Activated CD8-positive, alpha-beta T cell treated with anti-CD3 and anti-CD28 coated beads, Interleukin-2, amount 10 ng/mL, durations not matched to agents 7 days and 5 days (primary cell): ENCODE measurements at regions of chrX and their contacts with region 1.

Region 1: DNA sequence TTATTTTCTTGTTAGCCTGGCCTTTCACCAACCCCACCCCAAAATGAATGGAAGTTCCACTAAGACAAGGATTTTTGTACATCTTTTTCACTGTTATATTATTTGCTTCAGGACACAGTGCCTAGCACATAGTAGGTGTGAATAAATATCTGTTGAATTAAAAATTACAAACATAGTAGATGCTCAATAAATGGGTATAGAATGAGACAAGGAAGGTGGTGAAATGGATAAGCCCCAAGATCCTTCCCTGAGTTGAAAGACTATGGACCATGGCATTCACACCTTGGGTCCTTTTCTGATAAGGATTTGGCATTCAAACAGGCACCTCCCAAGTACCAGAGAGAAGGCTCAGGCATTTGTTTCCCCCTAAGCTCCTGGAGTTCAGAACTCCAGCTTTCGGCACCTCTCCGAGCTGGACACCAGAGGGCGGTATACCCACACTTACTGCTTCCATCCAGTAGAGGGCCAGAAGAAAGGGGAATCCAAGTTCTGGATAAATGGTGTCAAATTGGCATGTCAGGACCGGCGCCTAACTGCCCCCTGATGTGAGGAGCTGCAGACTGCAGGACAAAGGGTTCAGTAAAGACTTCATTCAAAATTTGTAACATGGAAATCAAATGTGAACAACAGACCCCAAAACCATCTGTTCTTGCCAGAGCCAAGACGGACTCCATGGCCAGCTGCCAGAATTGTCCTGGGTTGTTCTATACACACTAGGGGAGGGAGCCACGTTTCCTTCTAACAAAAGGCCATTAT is 193.0 kb downstream of the GPC3 start:
- DNase-seq: peak; percentile 69
- ATAC-seq: peak; percentile 76
- H3K4me3 Mint-ChIP-seq: no peak overlapping the region
- H3K27ac Mint-ChIP-seq: no peak overlapping the region
- H3K4me1 Mint-ChIP-seq: no peaks in the 10 kb centered on the region
- H3K27me3 Mint-ChIP-seq: peaks cover 2% of the 10 kb centered on the region

Region 2: DNA sequence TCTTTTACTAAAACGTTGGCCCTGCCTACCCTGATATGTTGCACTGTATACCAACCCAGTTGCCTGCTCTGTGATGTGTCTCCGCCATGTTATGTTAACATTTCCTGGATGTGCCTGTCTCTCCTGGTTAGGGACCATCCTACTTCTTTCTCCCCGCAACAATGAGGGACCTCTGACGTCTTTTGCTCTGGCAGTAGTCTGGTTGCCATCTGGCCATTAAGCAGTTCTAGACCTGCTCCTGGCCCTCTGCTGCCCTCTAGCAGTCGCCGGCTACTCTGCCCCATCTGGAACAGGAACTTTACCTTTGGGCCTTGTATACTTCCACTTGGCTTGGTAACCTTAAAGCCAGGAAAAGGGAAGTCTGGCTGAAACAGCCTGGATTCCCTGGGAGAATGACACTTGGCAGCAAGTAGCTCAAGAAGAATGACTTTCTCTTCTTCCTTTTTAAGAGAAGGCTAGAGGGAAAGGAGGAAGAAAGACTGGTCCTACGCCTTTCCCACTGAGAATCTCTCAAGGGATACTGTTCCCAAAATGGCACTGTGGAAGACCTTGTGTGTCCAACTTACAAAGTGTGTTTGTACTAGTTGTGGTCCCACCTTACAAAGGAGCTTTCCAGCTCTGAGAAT is 129.5 kb after region 1 on chrX:
- CTCF ChIA-PET with region 1: interaction called, 18 read pairs
- POLR2A ChIA-PET with region 1: no interaction called
- DNase-seq: peak; percentile 41
- ATAC-seq: no peak
- H3K4me3 Mint-ChIP-seq: no peak overlapping the region
- H3K27ac Mint-ChIP-seq: no peak overlapping the region
- H3K4me1 Mint-ChIP-seq: peaks cover 18% of the 10 kb centered on the region
- H3K27me3 Mint-ChIP-seq: no peaks in the 10 kb centered on the region

Region 3: DNA sequence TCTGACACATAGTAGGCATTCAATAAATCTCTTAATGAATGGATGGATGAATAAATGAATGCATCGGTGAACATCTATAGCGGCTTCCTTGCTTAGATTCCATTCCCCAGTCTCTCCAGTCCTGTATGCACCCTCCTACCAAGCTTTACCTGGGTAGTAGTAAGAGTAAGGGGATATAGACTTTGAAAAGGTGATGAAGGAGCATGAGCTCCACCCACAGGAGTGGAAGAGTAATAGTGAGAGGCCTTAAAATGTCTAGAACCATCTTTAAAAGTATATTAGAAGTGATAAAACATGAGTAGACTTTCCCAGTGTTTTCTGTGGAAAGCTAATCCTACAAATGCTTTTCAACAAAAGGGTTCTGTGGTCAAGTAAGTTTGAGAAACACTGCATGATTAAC is 228.5 kb after region 1 on chrX:
- CTCF ChIA-PET with region 1: interaction called, 23 read pairs
- POLR2A ChIA-PET with region 1: no interaction called
- DNase-seq: no peak
- ATAC-seq: no peak
- H3K4me3 Mint-ChIP-seq: no peak overlapping the region
- H3K27ac Mint-ChIP-seq: no peak overlapping the region
- H3K4me1 Mint-ChIP-seq: no peaks in the 10 kb centered on the region
- H3K27me3 Mint-ChIP-seq: peaks cover 5% of the 10 kb centered on the region

Region 4: DNA sequence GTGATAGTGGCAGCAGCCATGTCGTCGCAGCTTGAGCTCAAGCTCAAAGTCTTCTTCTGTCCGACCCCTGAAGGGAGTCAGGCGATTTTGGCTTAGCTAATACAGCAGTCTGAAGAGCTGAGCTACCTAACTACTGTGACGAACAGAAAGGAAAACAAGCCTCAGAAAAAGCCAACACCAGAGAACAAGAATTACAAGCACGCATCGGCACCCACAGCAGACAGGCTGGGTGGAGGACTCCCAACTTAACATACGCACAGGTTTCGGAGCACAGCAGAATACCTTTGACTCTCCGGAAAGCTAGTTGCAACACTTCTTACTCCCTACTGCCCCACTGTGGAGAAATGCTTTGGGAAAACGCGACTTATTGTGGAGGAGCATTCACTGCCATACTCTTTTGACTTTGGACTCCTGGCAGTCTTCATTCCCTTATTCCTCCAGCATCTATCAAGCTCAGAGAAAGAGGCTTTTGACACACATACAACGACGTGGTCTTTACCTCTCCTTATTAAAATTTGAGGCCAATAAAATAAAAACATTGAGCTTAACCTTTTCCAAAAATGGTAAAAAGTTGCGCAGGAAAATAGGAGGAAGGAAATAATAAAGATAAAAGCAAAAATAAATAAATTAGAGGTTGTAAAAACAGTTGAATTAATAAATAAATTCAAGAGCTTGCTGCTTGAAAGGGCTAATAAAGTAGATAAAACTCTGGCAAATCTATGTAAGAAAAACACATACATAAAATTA is 234.4 kb after region 1 on chrX:
- CTCF ChIA-PET with region 1: interaction called, 23 read pairs
- POLR2A ChIA-PET with region 1: no interaction called
- DNase-seq: peak; percentile 37
- ATAC-seq: no peak
- H3K4me3 Mint-ChIP-seq: no peak overlapping the region
- H3K27ac Mint-ChIP-seq: no peak overlapping the region
- H3K4me1 Mint-ChIP-seq: peaks cover 8% of the 10 kb centered on the region
- H3K27me3 Mint-ChIP-seq: no peaks in the 10 kb centered on the region

Region 5: DNA sequence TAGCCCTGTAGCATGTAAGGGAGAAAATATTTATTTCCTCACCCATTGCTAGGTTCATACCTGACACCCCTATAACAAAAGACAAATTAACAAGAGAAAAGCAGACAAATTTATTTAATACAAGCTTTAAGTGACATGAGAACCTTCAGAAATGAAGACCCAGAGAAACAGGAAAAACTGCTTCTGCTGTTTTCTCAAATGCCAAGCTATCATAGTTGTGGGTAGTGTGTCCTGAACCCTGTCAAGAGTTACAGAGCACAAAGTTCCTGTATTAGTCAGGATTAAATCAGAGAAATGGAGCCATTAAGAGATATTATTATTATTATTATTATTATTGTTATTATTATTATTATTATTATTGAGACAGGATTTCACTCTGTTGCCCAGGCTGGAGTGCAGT is 462.1 kb after region 1 on chrX:
- CTCF ChIA-PET with region 1: interaction called, 26 read pairs
- POLR2A ChIA-PET with region 1: no interaction called
- DNase-seq: no peak
- ATAC-seq: no peak
- H3K4me3 Mint-ChIP-seq: no peak overlapping the region
- H3K27ac Mint-ChIP-seq: no peak overlapping the region
- H3K4me1 Mint-ChIP-seq: no peaks in the 10 kb centered on the region
- H3K27me3 Mint-ChIP-seq: no peaks in the 10 kb centered on the region